A549 (cell line): ENCODE measurements at regions of chr20 and their contacts with region 1.

Region 1: DNA sequence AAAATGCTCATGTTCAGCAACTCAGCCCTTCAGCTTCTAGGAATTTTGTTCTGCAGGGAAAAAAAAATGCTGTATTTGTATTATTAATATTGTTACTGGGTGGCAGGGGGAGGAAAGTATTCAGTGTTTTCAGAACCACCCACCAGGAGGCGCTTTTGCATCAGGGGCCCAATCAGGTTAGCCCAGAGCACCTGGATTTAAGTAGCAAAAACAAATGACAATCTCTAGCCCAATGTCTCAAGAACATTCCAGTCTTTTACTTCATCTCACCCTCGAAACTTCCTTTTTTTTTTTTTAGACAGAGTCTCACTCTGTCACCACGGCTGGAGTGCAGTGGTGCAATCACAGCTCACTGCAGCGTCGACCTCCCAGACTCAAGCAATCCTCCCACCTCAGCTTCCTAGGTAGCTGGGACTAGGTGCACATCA is 635 bp upstream of the C20orf203 start:
- DNase-seq: peak; percentile 66 to 80
- ATAC-seq: peak; percentile 74 to 87
- H3K4me3 ChIP-seq: no peak overlapping the region
- H3K27ac ChIP-seq: no peak overlapping the region
- H3K4me1 ChIP-seq: peaks cover 17% of the 10 kb centered on the region; the same call in 2 of the 3 replicates
- CTCF ChIP-seq: peak; percentile 93
- EP300 ChIP-seq: no peak
- POLR2A ChIP-seq: no peak
- RAD21 ChIP-seq: peak; percentile 95 to 96

Region 2: GRCh38 chr20:32252189-32252588 is 422.2 kb before region 1 on chr20:
- CTCF ChIA-PET with region 1: no interaction called
- POLR2A ChIA-PET with region 1: no interaction called
- DNase-seq: no peak
- ATAC-seq: no peak
- H3K4me3 ChIP-seq: no peak overlapping the region
- H3K27ac ChIP-seq: no peak overlapping the region
- H3K4me1 ChIP-seq: peaks cover 23% of the 10 kb centered on the region
- CTCF ChIP-seq: no peak
- EP300 ChIP-seq: no peak
- POLR2A ChIP-seq: no peak
- RAD21 ChIP-seq: no peak

Region 3: DNA sequence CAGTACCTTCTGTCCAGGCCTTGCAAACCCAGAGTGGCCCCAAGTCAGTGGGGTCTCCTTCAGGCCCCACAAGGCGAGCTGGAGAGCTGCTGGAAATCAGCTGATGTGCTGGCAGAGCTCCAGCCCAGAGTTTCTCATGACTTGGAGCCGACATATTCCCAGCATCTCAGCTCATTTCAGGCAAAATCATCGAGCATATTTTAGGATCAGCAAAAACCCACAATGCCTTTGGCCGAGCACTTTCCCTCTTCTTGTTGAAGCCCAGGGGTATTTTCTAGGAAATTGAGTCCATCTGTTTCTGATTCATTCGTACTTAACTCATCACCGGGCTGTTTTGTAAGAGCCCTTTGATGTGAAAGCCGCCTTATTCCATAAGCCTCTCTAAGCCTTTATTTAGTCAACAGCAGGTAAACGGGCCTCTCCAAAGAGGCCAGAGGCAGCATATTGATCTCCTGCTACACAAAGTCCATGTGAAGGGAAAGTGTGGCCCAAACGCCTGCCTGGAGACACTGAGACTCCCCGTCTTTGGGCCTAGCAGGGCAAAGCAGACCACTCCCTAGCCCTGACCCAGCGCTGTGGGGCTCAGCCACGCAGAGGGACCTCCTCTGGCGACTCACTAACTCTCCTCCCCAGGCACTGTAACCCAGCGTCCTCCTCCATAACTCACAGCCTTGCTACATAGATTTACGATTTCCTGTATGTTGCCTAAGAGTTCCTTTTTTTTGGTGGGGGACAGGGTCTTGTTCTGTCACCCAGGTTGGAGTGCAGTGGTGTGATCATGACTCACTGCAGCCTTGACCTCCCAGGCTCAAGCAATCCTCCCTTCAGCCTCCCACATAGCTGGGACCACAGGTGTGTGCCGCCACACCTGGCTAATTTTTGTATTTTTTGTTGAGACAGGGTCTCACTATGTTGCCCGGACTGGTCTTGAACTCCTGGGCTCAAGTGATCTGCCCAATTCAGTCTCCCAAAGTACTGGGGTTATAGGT is 11.5 kb after region 1 on chr20:
- CTCF ChIA-PET with region 1: interaction called, 13 read pairs
- POLR2A ChIA-PET with region 1: interaction called, 4 read pairs
- DNase-seq: no peak
- ATAC-seq: peak in 1 of 2 experiments; percentile 15; a peak in 1 of 6 replicates
- H3K4me3 ChIP-seq: no peak overlapping the region
- H3K27ac ChIP-seq: peak overlapping the region in 1 of 2 experiments; percentile 32; a peak in 1 of 6 replicates
- H3K4me1 ChIP-seq: peaks cover 12% of the 10 kb centered on the region; the same call in 2 of the 3 replicates
- CTCF ChIP-seq: no peak
- EP300 ChIP-seq: no peak
- POLR2A ChIP-seq: no peak
- RAD21 ChIP-seq: no peak

Region 4: GRCh38 chr20:32737371-32738223 is 63.2 kb after region 1 on chr20:
- CTCF ChIA-PET with region 1: interaction called, 15 read pairs
- POLR2A ChIA-PET with region 1: no interaction called
- DNase-seq: no peak
- ATAC-seq: no peak
- H3K4me3 ChIP-seq: no peak overlapping the region
- H3K27ac ChIP-seq: peak overlapping the region; percentile 49 to 51
- H3K4me1 ChIP-seq: peaks cover 37% of the 10 kb centered on the region
- CTCF ChIP-seq: no peak
- EP300 ChIP-seq: no peak
- POLR2A ChIP-seq: no peak
- RAD21 ChIP-seq: no peak

Region 5: DNA sequence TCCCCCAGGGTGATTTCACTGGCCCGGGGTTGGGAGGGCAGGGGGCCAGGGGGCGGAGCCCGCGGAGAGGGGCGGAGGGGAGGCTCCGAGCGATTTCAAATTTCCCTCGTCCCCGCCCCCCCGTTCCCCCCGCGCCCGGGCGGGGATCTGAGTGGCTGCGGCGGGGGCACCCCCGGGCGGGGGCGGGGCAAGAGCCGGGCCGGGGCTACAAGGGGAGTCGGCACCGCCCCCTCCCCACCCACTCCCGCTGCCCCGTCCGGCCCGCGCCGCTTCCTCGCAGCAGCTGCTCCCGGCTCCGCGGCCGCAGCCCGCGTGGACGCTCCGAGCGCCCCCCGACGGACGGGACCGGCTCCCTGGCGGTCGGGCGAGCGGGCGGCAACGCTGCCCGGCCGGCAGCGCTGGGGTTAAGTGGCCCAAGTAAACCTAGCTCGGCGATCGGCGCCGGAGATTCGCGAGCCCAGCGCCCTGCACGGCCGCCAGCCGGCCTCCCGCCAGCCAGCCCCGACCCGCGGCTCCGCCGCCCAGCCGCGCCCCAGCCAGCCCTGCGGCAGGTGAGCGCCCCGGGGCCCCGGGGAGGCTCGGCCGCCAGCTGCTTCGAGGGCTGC is 87.9 kb after region 1 on chr20 and contains the start of gene DNMT3B:
- CTCF ChIA-PET with region 1: interaction called, 25 read pairs
- POLR2A ChIA-PET with region 1: no interaction called
- DNase-seq: peak; percentile 84 to 85
- ATAC-seq: peak; percentile 86
- H3K4me3 ChIP-seq: peak within 1 kb of the TSS; percentile 99
- H3K27ac ChIP-seq: peak within 1 kb of the TSS; percentile 93 to 99
- H3K4me1 ChIP-seq: peaks cover 37% of the 10 kb centered on the region
- CTCF ChIP-seq: peak; percentile 53
- EP300 ChIP-seq: no peak
- POLR2A ChIP-seq: peak; percentile 83
- RAD21 ChIP-seq: peak; percentile 11 to 62; a peak in 4 of 5 replicates
- polyA plus RNA-seq, gene DNMT3B: 5.2 and 6.2 TPM in 2 replicates

Region 6: DNA sequence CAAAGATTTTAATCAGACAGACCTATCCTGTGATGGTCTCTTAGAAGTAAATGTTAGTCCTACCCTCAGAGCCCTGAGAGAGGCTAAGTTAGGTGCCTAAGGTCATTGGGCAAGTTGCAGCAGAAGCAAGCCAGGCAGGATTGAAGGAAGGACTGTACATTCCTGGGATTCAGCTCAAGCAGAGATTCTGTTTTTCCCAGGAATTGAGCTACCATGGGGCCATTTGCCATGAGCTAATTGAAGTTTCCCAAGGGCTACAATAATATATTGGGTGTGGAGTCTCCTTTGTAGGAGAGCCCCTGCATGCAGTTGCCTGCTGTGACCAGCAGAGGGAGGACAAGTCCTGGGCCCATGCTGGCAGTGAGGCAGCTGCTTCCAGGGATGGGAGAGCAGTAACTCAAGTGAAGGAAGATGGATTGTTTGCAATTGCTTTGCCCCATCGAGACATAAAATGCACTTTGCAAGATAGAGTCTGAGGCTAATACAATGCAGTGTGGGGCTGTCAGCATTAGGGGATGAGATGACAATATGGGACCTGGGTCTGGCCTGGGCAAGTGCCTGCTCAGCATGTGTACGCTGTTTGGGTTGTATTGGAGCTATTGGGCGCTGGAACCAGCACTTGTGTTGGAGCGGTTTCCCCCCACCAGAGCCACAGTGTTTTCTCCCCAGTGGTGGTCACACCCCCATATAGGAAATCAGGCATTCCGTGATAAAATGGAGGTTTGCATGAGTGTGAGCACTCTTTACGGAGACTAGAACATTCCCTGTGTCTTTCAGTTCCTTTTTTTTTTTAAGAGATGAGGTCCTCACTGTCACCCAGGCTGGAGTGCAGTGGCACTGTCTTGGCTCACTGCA is 115.7 kb after region 1 on chr20:
- CTCF ChIA-PET with region 1: interaction called, 21 read pairs
- POLR2A ChIA-PET with region 1: no interaction called
- DNase-seq: peak; percentile 71 to 92
- ATAC-seq: peak; percentile 96
- H3K4me3 ChIP-seq: no peak overlapping the region
- H3K27ac ChIP-seq: no peak overlapping the region
- H3K4me1 ChIP-seq: no peaks in the 10 kb centered on the region
- CTCF ChIP-seq: peak; percentile 82
- EP300 ChIP-seq: no peak
- POLR2A ChIP-seq: no peak
- RAD21 ChIP-seq: peak; percentile 66 to 83